Pancreas (tissue), 10 donors: ENCODE measurements at regions of chr4 and their contacts with region 1.

Region 1: GRCh38 chr4:175560604-175561003 is 251.5 kb downstream of the GPM6A start:
- DNase-seq: no peak
- ATAC-seq: peak in 3 of 4 donors; percentile 63 to 80 (median 80)
- H3K4me3 ChIP-seq: no peak overlapping the region
- H3K27ac ChIP-seq: no peak overlapping the region
- H3K4me1 ChIP-seq: no peaks in the 10 kb centered on the region
- H3K27me3 ChIP-seq: no peaks in the 10 kb centered on the region
- CTCF ChIP-seq: no peak

Region 2: DNA sequence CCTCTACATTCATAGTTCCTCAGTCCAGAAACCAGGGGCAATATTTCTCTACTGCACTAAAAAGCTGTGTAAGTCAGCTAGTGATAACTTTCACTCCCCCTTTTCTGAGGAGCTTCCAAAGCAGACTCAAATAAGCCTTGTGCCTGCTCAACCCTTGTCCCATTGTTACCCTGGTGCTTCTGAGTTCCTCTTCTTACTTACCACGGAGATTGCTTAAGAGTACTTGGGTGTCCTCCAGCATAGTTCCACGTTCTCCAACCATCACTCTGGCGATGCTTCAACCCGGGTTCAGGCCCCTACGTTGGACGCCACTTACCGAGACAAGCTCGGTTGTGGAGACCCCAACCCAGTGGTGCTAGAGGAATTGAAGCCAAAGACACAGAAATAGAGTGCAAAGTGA is 570.8 kb before region 1 on chr4:
- intact Hi-C with region 1: no loop called
- DNase-seq: no peak
- ATAC-seq: no peak
- H3K4me3 ChIP-seq: no peak overlapping the region
- H3K27ac ChIP-seq: no peak overlapping the region
- H3K4me1 ChIP-seq: no peaks in the 10 kb centered on the region
- H3K27me3 ChIP-seq: no peaks in the 10 kb centered on the region
- CTCF ChIP-seq: no peak

Region 3: DNA sequence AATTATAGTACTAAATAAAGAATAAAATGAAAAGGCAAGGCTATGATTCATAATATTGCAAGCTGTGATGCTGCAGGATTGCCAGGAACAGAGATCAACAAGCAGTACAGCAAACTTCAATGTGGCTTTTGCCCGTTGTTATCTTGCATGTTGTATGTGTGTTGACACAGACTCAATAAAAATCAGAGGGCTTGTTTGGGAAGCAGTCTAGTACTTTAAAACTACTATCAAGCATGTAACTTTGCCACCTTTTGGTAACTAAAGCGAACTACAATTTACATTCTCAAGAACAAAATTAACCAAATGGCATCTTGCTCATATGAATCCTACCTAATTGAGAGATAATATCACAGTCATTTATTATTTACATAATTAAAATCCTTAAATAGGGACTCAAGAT is 331.2 kb after region 1 on chr4:
- intact Hi-C with region 1: loop called in 1 of 3 experiments (anchors 10 kb)
- DNase-seq: no peak
- ATAC-seq: peak; percentile 60 to 91 (median 86)
- H3K4me3 ChIP-seq: no peak overlapping the region
- H3K27ac ChIP-seq: no peak overlapping the region
- H3K4me1 ChIP-seq: no peaks in the 10 kb centered on the region
- H3K27me3 ChIP-seq: no peaks in the 10 kb centered on the region
- CTCF ChIP-seq: peak in 1 of 4 donors; percentile 11